Body of pancreas (tissue), 4 donors: ENCODE measurements at regions of chr4 and their contacts with region 1.

Region 1: DNA sequence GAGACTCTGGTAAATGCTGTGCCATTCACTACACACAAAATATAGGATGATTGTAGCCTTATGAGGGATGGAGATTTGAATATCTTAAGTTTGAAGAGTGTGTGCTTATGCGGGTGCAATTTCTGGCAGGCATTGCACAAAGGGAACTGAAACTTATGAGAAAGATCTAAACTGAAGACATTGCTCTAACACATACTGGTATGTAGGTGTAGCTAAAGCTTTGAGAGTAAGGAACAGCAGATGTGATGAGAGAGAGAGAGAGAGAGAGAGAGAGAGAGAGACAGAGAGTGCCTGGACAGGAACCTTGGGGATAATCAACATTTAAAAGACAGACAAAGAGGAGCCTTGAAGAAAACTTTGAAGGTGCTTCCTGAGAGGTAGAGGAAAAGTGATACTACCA is 379.7 kb downstream of the SPRY1 start:
- DNase-seq: no peak
- ATAC-seq: no peak
- H3K4me3 ChIP-seq: no peak overlapping the region
- H3K27ac ChIP-seq: no peak overlapping the region
- H3K4me1 ChIP-seq: no peaks in the 10 kb centered on the region
- H3K27me3 ChIP-seq: no peaks in the 10 kb centered on the region
- CTCF ChIP-seq: no peak
- POLR2A ChIP-seq: no peak

Region 2: DNA sequence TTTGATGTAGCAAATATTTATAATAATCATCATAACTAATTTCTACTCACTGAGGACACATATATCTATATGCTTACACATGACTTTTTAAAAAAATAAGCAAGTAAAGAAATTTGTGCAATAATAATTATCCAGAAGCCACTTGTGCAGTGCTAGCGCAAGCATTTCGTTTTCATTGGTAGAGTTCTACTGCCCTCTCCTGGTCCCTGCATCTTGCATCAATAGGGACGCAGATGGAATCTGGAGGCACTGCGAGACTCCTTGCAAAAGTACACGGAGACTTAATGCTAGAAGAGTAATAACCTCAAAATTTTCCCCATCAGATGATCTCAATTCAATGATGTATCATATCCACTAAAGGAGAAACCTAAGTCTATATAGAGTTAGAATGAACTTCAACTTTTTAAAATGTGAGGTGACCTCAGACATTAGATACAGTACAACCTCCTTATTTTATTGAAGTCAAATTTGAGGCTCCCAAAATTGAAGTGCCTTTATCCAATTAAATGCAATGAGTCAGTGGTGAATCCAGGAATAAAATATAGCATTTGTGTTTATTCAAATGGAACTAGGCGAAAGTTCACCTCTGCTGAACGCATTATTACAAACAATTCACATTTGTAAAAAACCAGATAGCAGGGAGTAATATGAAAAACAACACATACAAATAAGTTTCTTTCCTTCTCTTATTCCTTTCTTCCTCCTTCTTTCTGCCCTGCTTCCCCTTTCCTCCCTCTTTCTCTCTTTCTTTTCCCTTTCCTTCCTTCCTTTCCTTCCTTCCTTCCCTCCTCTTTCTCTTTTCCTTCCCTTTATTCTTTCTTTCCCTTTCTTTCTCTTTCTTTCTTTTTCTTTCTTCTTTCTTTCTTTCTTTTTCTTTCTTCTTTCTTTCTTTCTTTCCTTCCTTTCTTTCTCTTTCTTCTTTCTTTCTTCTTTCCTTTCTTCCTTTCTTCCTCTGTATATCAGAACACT is 486.2 kb after region 1 on chr4:
- intact Hi-C with region 1: loop called (anchors 10 kb)
- DNase-seq: peak; percentile 66 to 69 (median 67)
- ATAC-seq: peak; percentile 89
- H3K4me3 ChIP-seq: no peak overlapping the region
- H3K27ac ChIP-seq: no peak overlapping the region
- H3K4me1 ChIP-seq: no peaks in the 10 kb centered on the region
- H3K27me3 ChIP-seq: no peaks in the 10 kb centered on the region
- CTCF ChIP-seq: peak; percentile 47 to 85 (median 76)
- POLR2A ChIP-seq: no peak